Heart left ventricle (tissue), 16 donors: ENCODE measurements at regions of chr22 and their contacts with region 1.

Region 1: GRCh38 chr22:40636380-40637182 is at the start of gene MRTFA:
- DNase-seq: peak; percentile 100
- ATAC-seq: peak; percentile 96 to 98 (median 98)
- H3K4me3 ChIP-seq: peak within 1 kb of the TSS; percentile 73 to 99 (median 92)
- H3K27ac ChIP-seq: peak within 1 kb of the TSS; percentile 75 to 95 (median 92)
- H3K4me1 ChIP-seq: peaks cover 0 to 50% (median 26%) of the 10 kb centered on the region in 12 donors
- H3K27me3 ChIP-seq: no peaks in the 10 kb centered on the region
- CTCF ChIP-seq: peak in 2 of 12 donors; percentile 6 to 15
- POLR2A ChIP-seq: peak; percentile 80 to 96
- total RNA-seq, gene MRTFA: 14.0 to 52.6 (median 28.4) TPM

Region 2: GRCh38 chr22:40487663-40488249 is 148.8 kb before region 1 on chr22:
- intact Hi-C with region 1: loop called in 1 of 10 experiments (anchors 5 kb)
- DNase-seq: no peak
- ATAC-seq: no peak
- H3K4me3 ChIP-seq: no peak overlapping the region
- H3K27ac ChIP-seq: no peak overlapping the region
- H3K4me1 ChIP-seq: peaks cover 0 to 62% (median 40%) of the 10 kb centered on the region in 12 donors
- H3K27me3 ChIP-seq: no peaks in the 10 kb centered on the region
- CTCF ChIP-seq: peak; percentile 37 to 77 (median 62)
- POLR2A ChIP-seq: no peak

Region 3: DNA sequence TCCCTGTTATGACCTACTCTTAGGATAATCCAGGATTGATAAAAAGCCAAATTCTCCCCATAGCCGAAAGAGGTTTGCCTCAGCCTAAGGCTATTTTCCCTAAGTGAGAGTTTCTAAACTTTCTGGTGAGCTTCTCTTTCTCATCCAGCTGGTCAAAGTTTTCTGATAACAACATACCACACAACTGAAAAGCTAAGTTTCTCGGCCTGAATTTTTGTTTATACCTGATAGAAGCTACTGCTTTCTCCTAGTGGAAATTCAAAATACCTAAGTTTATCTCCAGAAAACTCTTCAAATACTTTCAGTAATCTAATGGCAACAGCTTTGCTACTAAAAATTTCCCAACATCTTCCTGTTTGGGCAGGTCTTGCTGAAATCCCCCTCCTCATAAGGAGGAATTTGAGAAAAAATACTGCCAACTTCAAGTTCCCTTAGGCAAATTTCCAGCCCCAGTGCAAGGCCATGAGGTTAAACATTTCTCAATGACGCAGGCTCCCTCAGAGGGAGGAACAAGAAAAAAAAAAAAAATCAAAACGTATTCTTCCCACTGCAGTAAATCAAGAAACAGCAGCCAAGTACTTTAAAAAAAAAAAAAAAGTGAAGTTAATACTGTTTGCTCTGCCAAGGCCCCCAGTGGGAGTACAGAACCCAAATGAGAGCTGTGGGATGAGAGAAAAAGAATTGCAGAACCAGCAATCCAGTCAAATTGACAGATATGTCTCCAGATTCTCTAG is 127.0 kb before region 1 on chr22:
- intact Hi-C with region 1: loop called in 1 of 10 experiments (anchors 5 kb)
- DNase-seq: peak in 4 of 5 donors; percentile 37 to 74 (median 64)
- ATAC-seq: peak; percentile 63 to 84 (median 75)
- H3K4me3 ChIP-seq: peak overlapping the region in 1 of 12 donors; percentile 5
- H3K27ac ChIP-seq: peak overlapping the region; percentile 68 to 92 (median 78)
- H3K4me1 ChIP-seq: peaks cover 6 to 80% (median 55%) of the 10 kb centered on the region in 12 donors
- H3K27me3 ChIP-seq: no peaks in the 10 kb centered on the region
- CTCF ChIP-seq: no peak
- POLR2A ChIP-seq: no peak

Region 4: DNA sequence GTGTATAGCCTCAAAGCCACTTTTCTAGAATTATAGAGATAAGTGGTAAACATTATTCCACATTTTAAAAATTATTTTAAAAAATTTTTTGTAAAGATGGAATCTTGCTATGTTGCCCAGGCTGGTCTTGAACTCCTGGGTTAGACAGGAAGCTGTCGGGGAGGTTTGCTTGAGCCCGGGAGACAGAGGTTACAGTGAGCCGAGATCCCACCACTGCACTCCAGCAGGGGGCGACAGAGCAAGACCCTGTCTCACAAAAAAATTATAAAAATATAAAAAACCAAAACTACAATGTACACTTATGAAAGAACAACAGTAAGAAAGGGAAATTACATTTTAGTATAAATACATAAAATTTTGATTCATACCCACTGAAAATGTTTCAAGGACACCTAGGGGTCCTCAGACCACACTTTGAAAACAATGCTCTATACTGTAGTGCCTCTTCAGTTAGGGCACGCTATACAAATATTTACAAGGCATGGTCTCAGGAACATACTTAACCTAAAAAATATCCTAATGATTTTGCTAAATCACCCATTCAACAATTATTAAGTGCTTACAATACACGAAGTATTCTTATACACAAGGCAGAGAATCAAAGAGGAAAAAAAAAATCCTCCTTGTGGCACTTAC is 111.2 kb before region 1 on chr22:
- intact Hi-C with region 1: loop called in 5 of 10 experiments (anchors 5 to 10 kb)
- DNase-seq: peak in 4 of 5 donors; percentile 41 to 70 (median 46)
- ATAC-seq: peak in 1 of 4 donors; percentile 58
- H3K4me3 ChIP-seq: no peak overlapping the region
- H3K27ac ChIP-seq: peak overlapping the region in 1 of 12 donors; percentile 30
- H3K4me1 ChIP-seq: peaks cover 0 to 19% (median 0%) of the 10 kb centered on the region in 12 donors
- H3K27me3 ChIP-seq: no peaks in the 10 kb centered on the region
- CTCF ChIP-seq: peak; percentile 55 to 78 (median 72)
- POLR2A ChIP-seq: no peak

Region 5: GRCh38 chr22:40533712-40534378 is 102.7 kb before region 1 on chr22:
- intact Hi-C with region 1: loop called in 5 of 10 experiments (anchors 5 to 10 kb)
- DNase-seq: no peak
- ATAC-seq: peak in 3 of 4 donors; percentile 67 to 81 (median 69)
- H3K4me3 ChIP-seq: peak overlapping the region in 11 of 12 donors; percentile 13 to 51 (median 39)
- H3K27ac ChIP-seq: peak overlapping the region in 10 of 12 donors; percentile 19 to 71 (median 51)
- H3K4me1 ChIP-seq: peaks cover 0 to 53% (median 34%) of the 10 kb centered on the region in 12 donors
- H3K27me3 ChIP-seq: no peaks in the 10 kb centered on the region
- CTCF ChIP-seq: no peak
- POLR2A ChIP-seq: peak in 1 of 2 donors; percentile 12

Region 6: DNA sequence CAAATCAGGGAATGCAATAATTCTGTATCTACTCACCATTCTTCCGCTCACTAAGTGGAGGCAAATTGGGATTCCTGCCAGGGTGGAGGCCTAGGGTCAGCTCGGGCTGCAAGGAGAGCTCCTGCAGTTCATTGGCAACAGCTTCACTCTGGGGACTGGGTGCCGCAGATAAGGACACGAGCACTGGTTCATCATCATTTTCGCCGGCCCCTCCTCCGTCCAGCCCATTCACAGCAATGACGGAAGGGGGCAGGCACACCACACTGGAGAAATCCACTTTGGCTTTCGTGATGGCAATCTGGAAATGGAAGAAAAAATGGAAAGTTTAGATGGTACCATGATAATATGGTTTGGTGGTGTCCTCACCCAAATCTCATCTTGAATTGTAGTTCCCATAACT is 84.5 kb before region 1 on chr22:
- intact Hi-C with region 1: loop called in 2 of 10 experiments (anchors 10 kb)
- DNase-seq: peak; percentile 68 to 87 (median 80)
- ATAC-seq: peak; percentile 89 to 95 (median 91)
- H3K4me3 ChIP-seq: no peak overlapping the region
- H3K27ac ChIP-seq: no peak overlapping the region
- H3K4me1 ChIP-seq: peaks cover 0 to 17% (median 5%) of the 10 kb centered on the region in 12 donors
- H3K27me3 ChIP-seq: no peaks in the 10 kb centered on the region
- CTCF ChIP-seq: peak in 11 of 12 donors; percentile 33 to 64 (median 48)
- POLR2A ChIP-seq: no peak

Region 7: DNA sequence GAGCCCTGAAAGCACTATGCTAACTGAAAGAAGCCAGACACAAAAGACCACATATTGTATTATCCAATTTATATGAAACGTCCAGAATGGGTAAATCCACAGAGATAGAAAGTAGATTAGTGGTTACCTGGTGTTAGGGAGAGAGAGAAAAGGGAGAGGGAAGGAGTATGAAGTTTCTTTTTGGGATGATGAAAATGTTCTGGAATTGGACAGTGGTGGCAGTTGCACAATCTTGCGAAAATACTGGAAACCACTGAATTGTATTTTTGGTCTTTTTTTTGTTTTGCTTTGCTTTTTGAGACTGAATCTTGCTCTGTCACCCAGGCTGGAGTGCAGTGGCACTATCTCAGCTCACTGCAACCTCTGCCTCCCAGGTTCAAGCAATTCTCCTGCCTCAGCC is 63.6 kb before region 1 on chr22:
- intact Hi-C with region 1: no loop called
- DNase-seq: no peak
- ATAC-seq: no peak
- H3K4me3 ChIP-seq: no peak overlapping the region
- H3K27ac ChIP-seq: peak overlapping the region in 2 of 12 donors; percentile 16 to 49
- H3K4me1 ChIP-seq: peaks cover 0 to 15% (median under 1%) of the 10 kb centered on the region in 12 donors
- H3K27me3 ChIP-seq: no peaks in the 10 kb centered on the region
- CTCF ChIP-seq: no peak
- POLR2A ChIP-seq: no peak

Region 8: GRCh38 chr22:40597526-40598430 is 38.8 kb before region 1 on chr22:
- intact Hi-C with region 1: loop called in 2 of 10 experiments (anchors 5 kb)
- DNase-seq: no peak
- ATAC-seq: peak in 1 of 4 donors; percentile 36
- H3K4me3 ChIP-seq: no peak overlapping the region
- H3K27ac ChIP-seq: peak overlapping the region in 1 of 12 donors; percentile 5
- H3K4me1 ChIP-seq: peaks cover 0 to 76% (median 45%) of the 10 kb centered on the region in 12 donors
- H3K27me3 ChIP-seq: no peaks in the 10 kb centered on the region
- CTCF ChIP-seq: no peak
- POLR2A ChIP-seq: no peak